ENCODE measurements at regions of chr14 and their contacts with region 1.

Region 1: DNA sequence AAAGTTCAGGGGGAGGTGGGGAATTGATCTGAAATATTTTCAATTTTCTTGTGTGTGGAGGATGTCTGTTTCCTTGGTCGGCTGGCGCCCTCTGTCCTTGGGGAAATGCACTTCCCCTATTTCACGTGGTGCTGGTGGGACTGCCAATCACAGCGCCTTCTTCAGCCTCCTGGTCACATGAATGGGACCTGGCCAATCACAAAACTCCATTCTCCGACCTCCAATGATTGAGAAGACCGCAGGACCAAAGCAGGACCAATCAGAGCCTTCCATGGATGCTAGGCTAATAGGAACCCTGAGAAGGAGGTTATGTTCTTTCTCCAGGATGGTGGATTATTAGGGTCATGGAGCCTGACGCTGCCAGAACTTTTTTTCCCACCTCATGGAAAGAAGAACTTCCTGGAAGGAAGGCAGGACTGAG is 188.6 kb downstream of the TTC8 start:
- DNase-seq: peak; percentile 87 to 95
- H3K4me3 ChIP-seq: peak overlapping the region; percentile 45
- H3K4me3 Mint-ChIP-seq: peak overlapping the region; percentile 68
- H3K27ac Mint-ChIP-seq: peak overlapping the region; percentile 12
- H3K4me1 ChIP-seq: peaks cover 6% of the 10 kb centered on the region
- H3K4me1 Mint-ChIP-seq: peaks cover 7% of the 10 kb centered on the region
- H3K27me3 ChIP-seq: no peaks in the 10 kb centered on the region
- H3K27me3 Mint-ChIP-seq: no peaks in the 10 kb centered on the region
- CTCF ChIP-seq: peak; percentile 34 to 51

Region 2: GRCh38 chr14:88492272-88493089 is 520.6 kb before region 1 on chr14:
- CTCF ChIA-PET with region 1: no interaction called
- POLR2A ChIA-PET with region 1: no interaction called
- intact Hi-C with region 1: loop called (anchors 1 kb)
- DNase-seq: peak; percentile 73 to 88
- H3K4me3 ChIP-seq: no peak overlapping the region
- H3K4me3 Mint-ChIP-seq: no peak overlapping the region
- H3K27ac Mint-ChIP-seq: peak overlapping the region; percentile 7
- H3K4me1 ChIP-seq: peaks cover 14% of the 10 kb centered on the region; the same call in 1 of the 2 replicates
- H3K4me1 Mint-ChIP-seq: peaks cover 19% of the 10 kb centered on the region
- H3K27me3 ChIP-seq: no peaks in the 10 kb centered on the region
- H3K27me3 Mint-ChIP-seq: no peaks in the 10 kb centered on the region
- CTCF ChIP-seq: peak; percentile 79 to 88

Region 3: DNA sequence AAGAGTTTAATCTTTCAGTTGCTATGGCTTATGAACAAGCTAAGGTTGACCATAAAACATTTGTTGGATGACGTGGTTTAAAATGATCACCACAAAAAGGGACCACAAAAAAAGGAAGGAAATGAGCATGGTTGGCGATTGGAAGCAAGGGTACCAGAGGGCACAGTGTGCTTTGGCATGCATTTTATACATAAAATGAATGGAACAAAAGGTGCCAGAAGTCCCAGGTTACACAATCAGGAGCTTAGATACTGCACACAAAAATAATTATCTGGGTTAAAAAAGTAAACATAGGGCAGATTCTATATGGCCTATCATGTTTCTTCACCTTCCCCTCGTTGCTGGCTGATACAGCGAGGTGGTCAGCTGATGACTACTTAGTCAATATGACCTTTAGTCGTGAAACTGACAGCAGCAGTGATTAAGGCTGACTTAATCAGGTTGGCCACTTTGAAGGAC is 399.5 kb before region 1 on chr14:
- CTCF ChIA-PET with region 1: no interaction called
- POLR2A ChIA-PET with region 1: no interaction called
- intact Hi-C with region 1: loop called (anchors 5 kb)
- DNase-seq: peak; percentile 62 to 70
- H3K4me3 ChIP-seq: no peak overlapping the region
- H3K4me3 Mint-ChIP-seq: peak overlapping the region; percentile 16
- H3K27ac Mint-ChIP-seq: no peak overlapping the region
- H3K4me1 ChIP-seq: peaks cover 22% of the 10 kb centered on the region
- H3K4me1 Mint-ChIP-seq: peaks cover 16% of the 10 kb centered on the region
- H3K27me3 ChIP-seq: no peaks in the 10 kb centered on the region
- H3K27me3 Mint-ChIP-seq: no peaks in the 10 kb centered on the region
- CTCF ChIP-seq: no peak

Region 4: GRCh38 chr14:88729159-88729558 is 283.9 kb before region 1 on chr14:
- CTCF ChIA-PET with region 1: no interaction called
- POLR2A ChIA-PET with region 1: no interaction called
- intact Hi-C with region 1: loop called (anchors 5 kb)
- DNase-seq: no peak
- H3K4me3 ChIP-seq: no peak overlapping the region
- H3K4me3 Mint-ChIP-seq: no peak overlapping the region
- H3K27ac Mint-ChIP-seq: no peak overlapping the region
- H3K4me1 ChIP-seq: no peaks in the 10 kb centered on the region
- H3K4me1 Mint-ChIP-seq: no peaks in the 10 kb centered on the region
- H3K27me3 ChIP-seq: no peaks in the 10 kb centered on the region; the same call in 1 of the 2 replicates
- H3K27me3 Mint-ChIP-seq: no peaks in the 10 kb centered on the region
- CTCF ChIP-seq: peak; percentile 25 to 45

Region 5: GRCh38 chr14:88824314-88825077 is 188.6 kb before region 1 on chr14 and contains the start of gene TTC8:
- CTCF ChIA-PET with region 1: no interaction called
- POLR2A ChIA-PET with region 1: no interaction called
- intact Hi-C with region 1: loop called (anchors 2 kb)
- DNase-seq: peak; percentile 86 to 88
- H3K4me3 ChIP-seq: peak within 1 kb of the TSS; percentile 63
- H3K4me3 Mint-ChIP-seq: peak within 1 kb of the TSS; percentile 80
- H3K27ac Mint-ChIP-seq: peak within 1 kb of the TSS; percentile 98
- H3K4me1 ChIP-seq: peaks cover 5% of the 10 kb centered on the region
- H3K4me1 Mint-ChIP-seq: peaks cover 6% of the 10 kb centered on the region
- H3K27me3 ChIP-seq: no peaks in the 10 kb centered on the region
- H3K27me3 Mint-ChIP-seq: peaks cover 5% of the 10 kb centered on the region
- CTCF ChIP-seq: peak in 1 of 2 experiments; percentile 4
- total RNA-seq, gene TTC8: 9.6 and 13.6 TPM in 2 replicates

Region 6: DNA sequence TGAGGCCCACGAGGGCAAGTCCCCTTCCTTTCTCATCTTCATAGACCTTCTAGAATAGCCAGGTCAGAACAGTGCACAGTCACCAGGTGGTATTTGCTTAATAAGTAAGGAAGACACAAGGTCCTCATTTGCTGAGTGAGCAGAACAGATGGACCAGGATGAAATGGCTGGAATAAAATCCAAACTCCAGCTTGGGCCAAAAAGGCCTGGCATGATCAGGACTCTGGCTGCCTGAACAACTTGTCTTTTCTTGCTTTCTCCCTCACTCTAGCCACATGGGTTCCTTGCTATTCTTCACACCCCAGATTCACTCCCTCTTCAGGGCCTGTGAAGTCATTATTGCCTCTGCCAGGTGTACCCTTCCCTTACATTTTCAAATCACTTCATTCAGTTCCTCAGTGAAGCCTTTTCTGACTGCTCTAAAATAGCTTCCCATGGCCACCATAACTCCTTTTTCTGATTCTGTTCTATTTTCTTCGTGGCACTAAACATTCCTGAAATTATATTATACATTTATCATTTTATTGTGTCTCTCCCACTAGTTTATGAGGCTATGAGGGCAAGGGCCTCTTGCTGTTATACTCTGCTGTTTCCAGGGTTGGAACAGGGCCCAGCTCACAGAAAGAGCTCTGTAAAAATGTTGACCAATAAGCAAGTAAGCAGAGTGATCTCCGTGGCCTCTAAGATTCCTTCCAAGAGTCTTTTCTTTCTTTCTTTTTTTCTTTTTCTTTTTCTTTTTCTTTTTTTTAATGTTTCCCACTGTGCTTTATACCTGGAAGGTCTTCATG is 37.9 kb before region 1 on chr14:
- CTCF ChIA-PET with region 1: no interaction called
- POLR2A ChIA-PET with region 1: no interaction called
- intact Hi-C with region 1: no loop called
- DNase-seq: no peak
- H3K4me3 ChIP-seq: no peak overlapping the region
- H3K4me3 Mint-ChIP-seq: no peak overlapping the region
- H3K27ac Mint-ChIP-seq: no peak overlapping the region
- H3K4me1 ChIP-seq: no peaks in the 10 kb centered on the region
- H3K4me1 Mint-ChIP-seq: no peaks in the 10 kb centered on the region
- H3K27me3 ChIP-seq: no peaks in the 10 kb centered on the region
- H3K27me3 Mint-ChIP-seq: peaks cover 9% of the 10 kb centered on the region
- CTCF ChIP-seq: no peak

Measured in Caco-2 (cell line).